ENCODE measurements at regions of chr4 and their contacts with region 1.

Region 1: GRCh38 chr4:87422104-87423052 is at the start of gene NUDT9:
- DNase-seq: peak; percentile 79
- H3K4me3 Mint-ChIP-seq: peak within 1 kb of the TSS; percentile 99
- H3K27ac Mint-ChIP-seq: peak within 1 kb of the TSS; percentile 95
- H3K4me1 Mint-ChIP-seq: peaks cover 30% of the 10 kb centered on the region
- H3K27me3 Mint-ChIP-seq: peaks cover 5% of the 10 kb centered on the region
- total RNA-seq, gene NUDT9: 13.9 and 14.6 TPM in 2 replicates

Region 2: DNA sequence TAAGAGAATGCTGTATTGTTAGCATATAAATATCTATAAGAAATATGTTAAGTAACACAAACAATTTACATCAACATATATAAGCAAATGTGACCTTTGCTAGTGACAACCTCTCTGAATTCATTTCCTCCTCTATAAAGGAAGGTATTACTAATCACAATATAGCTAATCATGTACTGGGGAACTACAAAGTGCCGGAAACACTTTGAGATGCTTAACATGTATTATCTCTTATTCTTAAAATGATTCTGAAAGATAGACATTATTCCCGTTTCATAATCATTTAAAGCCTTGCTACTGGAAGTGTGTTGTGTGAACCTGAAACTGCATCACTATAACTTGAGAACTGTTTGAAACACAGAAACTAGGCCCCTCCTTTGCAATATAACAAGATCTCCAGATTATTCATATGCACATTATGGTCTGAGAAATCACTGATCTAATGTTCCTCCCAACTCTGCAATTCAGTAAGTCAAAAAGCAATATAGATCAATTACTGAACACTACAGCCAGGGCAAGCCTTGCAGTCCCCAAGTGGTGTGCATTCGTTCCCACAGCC is 256.0 kb before region 1 on chr4:
- intact Hi-C with region 1: no loop called
- DNase-seq: no peak
- H3K4me3 Mint-ChIP-seq: no peak overlapping the region
- H3K27ac Mint-ChIP-seq: no peak overlapping the region
- H3K4me1 Mint-ChIP-seq: no peaks in the 10 kb centered on the region
- H3K27me3 Mint-ChIP-seq: no peaks in the 10 kb centered on the region

Region 3: GRCh38 chr4:87375719-87376291 is 46.6 kb before region 1 on chr4:
- intact Hi-C with region 1: loop called (anchors 1 kb)
- DNase-seq: no peak
- H3K4me3 Mint-ChIP-seq: no peak overlapping the region
- H3K27ac Mint-ChIP-seq: no peak overlapping the region
- H3K4me1 Mint-ChIP-seq: no peaks in the 10 kb centered on the region
- H3K27me3 Mint-ChIP-seq: no peaks in the 10 kb centered on the region

Region 4: DNA sequence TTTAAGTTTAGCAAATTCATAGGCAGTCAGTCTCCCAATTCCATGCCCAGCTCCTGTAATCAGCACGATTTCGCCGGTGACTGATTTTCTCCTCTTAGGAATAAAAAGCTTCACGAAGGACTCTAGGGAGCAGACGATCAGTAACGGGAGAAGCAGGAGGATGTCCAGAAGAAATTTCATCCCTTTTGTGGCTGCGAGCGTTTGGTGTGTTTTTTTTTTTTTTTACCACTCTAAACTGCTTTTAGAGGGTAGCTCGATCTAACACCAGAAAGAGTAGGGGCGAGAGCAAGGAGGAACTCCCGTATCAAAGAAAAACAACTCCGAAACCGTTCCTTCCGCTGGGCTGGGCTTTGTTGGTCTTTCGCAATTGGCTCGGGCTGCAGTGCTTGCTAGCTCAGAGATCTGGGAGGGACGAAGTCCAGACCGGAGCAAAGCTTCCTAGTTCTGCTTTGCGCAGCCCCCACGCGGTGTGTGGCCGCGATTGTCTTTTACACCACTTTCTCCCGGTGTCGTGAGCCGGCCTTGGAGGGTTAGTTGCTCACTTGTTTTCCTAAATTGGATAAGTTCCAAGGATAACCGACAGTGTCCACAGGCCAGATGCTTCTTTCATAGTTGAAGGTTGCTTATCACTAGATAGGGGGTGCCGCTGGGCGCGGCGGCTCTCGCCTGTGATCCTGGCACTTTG is 31.3 kb before region 1 on chr4 and contains the start of gene HSD17B11:
- intact Hi-C with region 1: loop called (anchors 1 kb)
- DNase-seq: peak; percentile 74
- H3K4me3 Mint-ChIP-seq: peak within 1 kb of the TSS; percentile 94
- H3K27ac Mint-ChIP-seq: peak within 1 kb of the TSS; percentile 85
- H3K4me1 Mint-ChIP-seq: peaks cover 44% of the 10 kb centered on the region
- H3K27me3 Mint-ChIP-seq: peaks cover 8% of the 10 kb centered on the region
- total RNA-seq, gene HSD17B11: 12.1 and 12.7 TPM in 2 replicates

Region 5: DNA sequence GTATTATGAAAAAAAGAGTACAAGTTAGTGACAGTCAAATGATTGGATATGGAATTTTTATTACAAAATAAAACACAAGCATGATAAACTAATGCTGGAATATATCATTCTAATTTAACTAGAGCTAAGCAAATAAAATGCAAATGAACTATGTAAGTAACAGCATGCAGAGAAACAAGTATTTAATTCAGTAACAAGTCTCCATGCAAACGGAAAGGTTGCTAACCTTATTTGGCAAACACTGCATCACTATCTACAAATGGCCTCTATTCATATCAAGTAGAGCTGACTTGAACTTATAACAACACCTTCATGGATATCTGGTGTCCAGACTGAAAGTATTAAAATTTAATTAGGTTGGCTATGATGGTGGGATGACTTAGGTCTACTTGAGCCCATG is 846.5 kb after region 1 on chr4:
- intact Hi-C with region 1: no loop called
- DNase-seq: no peak
- H3K4me3 Mint-ChIP-seq: no peak overlapping the region
- H3K27ac Mint-ChIP-seq: no peak overlapping the region
- H3K4me1 Mint-ChIP-seq: no peaks in the 10 kb centered on the region
- H3K27me3 Mint-ChIP-seq: no peaks in the 10 kb centered on the region

Measured in activated T-helper 1 cell treated with anti-CD3 and anti-CD28 coated beads, Interleukin-12 subunit alpha, Interleukin-12 subunit beta, Interleukin-2, Interleukin-4 antibody, amounts not matched to agents 30 ng/mL and 10 ng/mL and 1 ng/mL, durations not matched to agents 14 hours and 24 hours and 36 hours (primary cell).